ENCODE measurements at regions of chr3 and their contacts with region 1.

Region 1: DNA sequence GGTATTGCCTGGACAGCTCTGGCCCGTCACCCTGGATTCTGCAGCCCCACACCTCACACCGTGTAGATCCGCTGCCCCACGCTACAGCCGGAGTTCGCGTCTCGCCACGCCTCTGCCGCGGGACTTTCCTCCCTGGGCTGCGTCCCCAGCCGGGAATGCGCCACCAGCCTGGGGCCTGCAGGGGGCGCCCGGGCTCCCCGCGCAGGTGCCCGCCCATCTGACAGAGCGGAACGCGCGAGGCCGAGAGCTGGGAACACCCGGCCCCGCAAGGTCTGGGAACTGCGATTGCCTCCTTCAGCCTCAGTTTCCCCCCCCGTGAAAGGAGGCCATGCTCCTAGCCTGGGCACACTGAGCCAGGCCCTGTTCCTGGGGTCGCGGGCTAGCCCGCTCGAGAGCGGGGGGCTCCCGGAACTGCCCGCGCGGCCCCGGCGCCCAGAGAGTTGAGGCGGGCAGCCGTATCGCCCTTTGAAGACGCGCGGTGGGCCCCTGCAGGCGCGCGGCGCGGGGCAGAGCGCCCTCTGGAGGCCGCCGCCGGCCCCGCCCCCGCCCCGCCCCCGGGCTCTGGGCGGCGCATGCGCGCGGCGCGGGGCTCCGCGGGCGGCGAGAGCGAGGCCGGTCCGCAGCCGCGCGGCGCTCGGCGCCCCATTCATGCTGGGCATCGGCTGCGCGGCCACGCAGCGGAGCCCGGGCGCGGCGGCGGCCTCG is at the start of gene PLXNA1:
- DNase-seq: peak; percentile 71 to 83
- ATAC-seq: peak; percentile 76 to 89 (median 81)
- H3K4me3 ChIP-seq: peak within 1 kb of the TSS; percentile 70 to 87 (median 76)
- H3K27ac ChIP-seq: peak within 1 kb of the TSS in 9 of 10 donors; percentile 59 to 93 (median 73)
- H3K4me1 ChIP-seq: peaks cover 18 to 50% (median 41%) of the 10 kb centered on the region in 9 donors
- H3K27me3 ChIP-seq: peaks cover 0 to 39% (median 0%) of the 10 kb centered on the region in 7 donors
- CTCF ChIP-seq: peak; percentile 81 to 94 (median 89)
- total RNA-seq, gene PLXNA1: 19.0 to 29.7 (median 25.1) TPM

Region 2: GRCh38 chr3:126703512-126704462 is 278.8 kb before region 1 on chr3 and contains the start of gene CHCHD6:
- intact Hi-C with region 1: loop called in 1 of 10 experiments (anchors 5 kb)
- DNase-seq: peak; percentile 94 to 97
- ATAC-seq: peak; percentile 99 to 100 (median 99)
- H3K4me3 ChIP-seq: peak within 1 kb of the TSS; percentile 55 to 96 (median 79)
- H3K27ac ChIP-seq: peak within 1 kb of the TSS in 8 of 10 donors; percentile 5 to 60 (median 36)
- H3K4me1 ChIP-seq: peaks cover 0 to 16% (median 14%) of the 10 kb centered on the region in 9 donors
- H3K27me3 ChIP-seq: peaks cover 0 to 34% (median 9%) of the 10 kb centered on the region in 7 donors
- CTCF ChIP-seq: peak in 3 of 9 donors; percentile 10 to 37 (median 28)
- total RNA-seq, gene CHCHD6: 5.2 to 15.8 (median 10.2) TPM

Region 3: GRCh38 chr3:126758026-126758425 is 224.6 kb before region 1 on chr3:
- intact Hi-C with region 1: loop called in 6 of 10 experiments (anchors 1 to 5 kb)
- DNase-seq: no peak
- ATAC-seq: peak in 3 of 8 donors; percentile 51 to 72 (median 51)
- H3K4me3 ChIP-seq: no peak overlapping the region
- H3K27ac ChIP-seq: no peak overlapping the region
- H3K4me1 ChIP-seq: peaks cover 0 to 19% (median 2%) of the 10 kb centered on the region in 9 donors
- H3K27me3 ChIP-seq: no peaks in the 10 kb centered on the region
- CTCF ChIP-seq: no peak

Region 4: DNA sequence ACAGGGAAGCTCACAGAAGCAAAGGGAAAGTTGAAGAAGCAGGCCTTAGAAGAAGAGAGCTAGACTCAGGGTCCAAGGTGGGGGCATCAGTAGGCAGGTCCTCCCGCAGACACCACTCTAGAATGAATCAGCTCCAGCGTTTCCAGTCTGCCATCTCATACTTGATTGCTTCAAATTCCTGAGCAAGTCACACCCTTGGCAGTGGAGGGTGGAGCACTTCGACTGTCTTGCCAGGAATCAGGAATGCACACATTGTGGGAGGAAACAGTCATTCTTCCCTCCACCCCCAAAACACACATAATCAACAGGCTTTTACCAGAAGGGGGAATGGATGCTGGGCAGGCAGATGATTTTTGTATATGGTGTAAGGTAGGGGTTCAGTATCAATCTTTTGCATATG is 200.1 kb before region 1 on chr3:
- intact Hi-C with region 1: no loop called
- DNase-seq: no peak
- ATAC-seq: peak in 2 of 8 donors; percentile 44 to 79
- H3K4me3 ChIP-seq: no peak overlapping the region
- H3K27ac ChIP-seq: peak overlapping the region in 3 of 10 donors; percentile 15 to 56 (median 32)
- H3K4me1 ChIP-seq: peaks cover 0 to 11% (median 6%) of the 10 kb centered on the region in 9 donors
- H3K27me3 ChIP-seq: no peaks in the 10 kb centered on the region
- CTCF ChIP-seq: no peak

Region 5: DNA sequence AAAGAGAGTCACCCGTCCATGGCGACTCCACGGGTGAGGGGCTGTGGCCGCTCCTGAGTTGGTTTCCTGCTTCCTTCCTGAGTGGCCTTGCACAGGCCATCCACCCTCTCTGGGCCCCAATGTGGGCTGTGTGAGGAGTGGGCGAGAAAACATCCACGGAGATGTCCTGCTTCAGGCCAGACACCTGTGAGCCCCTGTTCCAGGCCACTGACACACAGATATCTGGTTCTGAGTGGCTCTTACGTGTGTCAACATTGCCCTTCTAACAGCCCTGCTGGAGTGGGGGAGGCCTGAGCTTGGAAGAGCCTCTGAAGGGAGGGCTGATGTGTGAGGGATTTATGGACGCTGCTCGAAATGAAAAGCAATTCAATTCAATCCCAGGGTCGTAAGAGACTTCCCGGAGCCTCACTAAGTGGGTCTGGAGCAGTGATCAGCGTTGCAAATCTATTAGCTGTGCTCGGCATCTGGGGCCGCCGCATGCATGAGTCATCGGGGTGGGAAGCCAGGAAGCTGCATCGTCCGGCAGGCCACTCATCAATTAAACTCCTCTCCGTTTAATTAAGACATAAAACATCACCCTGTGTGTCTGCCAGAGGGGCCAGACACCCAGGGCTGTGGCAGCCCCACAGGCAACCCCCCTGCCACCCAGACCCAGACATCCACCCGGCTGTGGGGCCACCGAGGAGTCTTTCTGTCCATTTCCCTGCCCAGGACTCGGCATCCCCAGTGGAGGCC is 190.3 kb after region 1 on chr3:
- intact Hi-C with region 1: loop called in 5 of 10 experiments (anchors 5 to 10 kb)
- DNase-seq: no peak
- ATAC-seq: peak in 1 of 8 donors; percentile 28
- H3K4me3 ChIP-seq: no peak overlapping the region
- H3K27ac ChIP-seq: no peak overlapping the region
- H3K4me1 ChIP-seq: peaks cover 0 to 8% (median 5%) of the 10 kb centered on the region in 9 donors
- H3K27me3 ChIP-seq: peaks cover 0 to 23% (median 9%) of the 10 kb centered on the region in 7 donors
- CTCF ChIP-seq: no peak

Region 6: DNA sequence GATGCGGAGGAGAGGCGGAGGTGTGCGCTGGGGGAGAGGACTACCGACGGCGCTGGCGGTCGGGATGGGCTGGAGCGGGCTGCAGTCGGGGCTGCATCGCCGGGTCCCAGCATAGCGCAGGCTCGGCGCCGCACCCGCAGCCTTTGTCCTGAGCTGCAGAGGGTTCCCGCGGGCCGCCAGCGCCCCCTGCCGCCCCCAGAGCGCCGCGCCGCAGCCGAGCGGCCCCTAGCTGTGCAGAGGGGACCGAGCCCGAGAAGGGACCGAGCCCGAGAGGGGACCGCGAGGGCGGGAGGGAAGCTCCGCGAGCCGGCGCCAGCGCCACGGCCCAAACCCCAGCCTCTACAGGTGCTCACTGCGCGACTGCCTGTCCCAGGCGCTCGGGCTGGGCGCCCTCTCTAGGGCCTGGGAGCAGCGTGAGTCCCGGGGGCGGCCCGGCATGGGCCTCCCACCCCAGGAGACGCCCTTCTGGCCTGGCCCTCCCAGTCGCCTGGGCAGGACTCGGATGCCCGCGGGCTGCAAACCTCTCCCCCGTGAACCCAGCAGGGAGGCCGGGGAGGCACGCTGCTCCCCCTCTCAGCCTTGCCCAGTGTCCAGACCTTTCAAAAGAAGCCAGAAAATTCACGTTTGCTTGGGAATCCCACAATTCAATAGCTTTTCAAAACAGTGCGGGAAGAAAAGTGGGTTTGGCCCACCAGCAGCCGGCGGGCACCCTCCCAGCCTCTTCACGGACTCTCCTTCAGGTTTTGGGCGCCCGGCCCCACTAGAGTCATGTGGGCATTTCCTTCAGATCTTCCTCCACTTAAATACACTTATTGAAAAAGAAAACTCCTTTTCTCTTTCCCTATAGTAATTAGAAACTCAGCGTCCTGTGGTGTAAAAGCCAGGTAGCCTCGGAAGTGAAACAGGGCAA is 473.2 kb after region 1 on chr3:
- intact Hi-C with region 1: loop called in 3 of 10 experiments (anchors 5 to 10 kb)
- DNase-seq: peak; percentile 47 to 73
- ATAC-seq: peak; percentile 83 to 94 (median 89)
- H3K4me3 ChIP-seq: peak overlapping the region in 9 of 10 donors; percentile 12 to 42 (median 35)
- H3K27ac ChIP-seq: no peak overlapping the region
- H3K4me1 ChIP-seq: peaks cover 6 to 26% (median 21%) of the 10 kb centered on the region in 9 donors
- H3K27me3 ChIP-seq: peaks cover 15 to 78% (median 70%) of the 10 kb centered on the region in 7 donors
- CTCF ChIP-seq: peak; percentile 72 to 98 (median 92)